ENCODE measurements at regions of chr2 and their contacts with region 1.

Region 1: DNA sequence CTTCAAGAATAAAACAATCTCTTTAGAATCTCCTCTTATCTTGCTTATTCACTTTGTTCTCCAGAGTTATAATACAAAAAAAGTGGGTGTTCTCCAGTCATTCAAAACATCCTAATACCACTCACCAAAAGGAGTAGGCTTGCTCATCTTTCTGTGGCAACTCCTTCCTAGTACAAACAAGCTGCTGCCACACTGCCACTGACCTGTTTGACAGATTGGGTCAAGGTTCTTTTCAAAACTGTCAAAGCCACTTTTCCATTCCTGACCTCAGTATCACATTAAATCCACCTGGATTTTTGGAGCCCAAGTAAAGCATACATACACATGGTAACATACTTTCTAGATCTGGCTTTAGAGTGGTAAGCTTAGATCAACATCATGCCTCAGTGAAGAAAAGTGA is 59.8 kb downstream of the SLC25A12 start:
- DNase-seq: no peak
- H3K4me3 ChIP-seq: no peak overlapping the region
- H3K27ac ChIP-seq: no peak overlapping the region
- H3K4me1 ChIP-seq: peaks cover 2% of the 10 kb centered on the region
- H3K27me3 ChIP-seq: no peaks in the 10 kb centered on the region
- CTCF ChIP-seq: no peak
- EP300 ChIP-seq: no peak
- POLR2A ChIP-seq: no peak

Region 2: DNA sequence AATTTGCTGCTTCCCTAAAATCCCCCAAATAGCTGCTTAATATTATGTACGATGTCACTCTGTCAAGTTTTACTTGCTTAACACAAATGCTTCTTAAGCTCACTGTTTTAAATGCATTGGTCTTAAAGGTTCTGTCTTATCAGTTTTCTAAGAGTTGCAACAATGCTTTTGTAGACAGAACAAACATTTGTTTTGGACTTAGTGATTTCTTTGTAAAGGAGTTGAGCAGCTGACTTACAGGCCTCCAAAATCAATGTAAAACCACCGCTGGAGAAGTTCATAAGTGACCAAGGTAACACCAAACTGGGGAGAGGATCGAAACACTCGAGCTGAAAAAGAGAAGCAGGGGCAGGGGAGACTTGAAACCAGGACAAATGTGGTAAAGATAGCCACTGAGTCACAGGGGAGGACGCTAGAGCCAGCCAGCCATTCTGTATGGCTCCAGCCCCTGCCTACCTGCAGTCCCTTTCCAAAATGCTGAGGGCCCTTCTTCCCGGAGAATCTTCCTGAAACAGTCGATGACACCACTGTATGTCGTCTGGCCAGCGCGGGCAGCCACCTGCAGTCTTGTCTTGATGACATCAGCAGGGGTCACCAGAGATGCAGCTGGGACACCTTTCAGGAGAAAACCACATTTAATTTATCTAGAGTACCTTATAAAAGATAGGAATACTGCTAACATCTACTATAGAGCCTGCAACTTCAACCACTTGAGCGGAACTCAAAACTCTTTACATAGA is 46.8 kb before region 1 on chr2:
- intact Hi-C with region 1: no loop called
- DNase-seq: no peak
- H3K4me3 ChIP-seq: no peak overlapping the region
- H3K27ac ChIP-seq: no peak overlapping the region
- H3K4me1 ChIP-seq: no peaks in the 10 kb centered on the region
- H3K27me3 ChIP-seq: no peaks in the 10 kb centered on the region
- CTCF ChIP-seq: no peak
- EP300 ChIP-seq: no peak
- POLR2A ChIP-seq: no peak

Region 3: GRCh38 chr2:171930385-171930784 is 96.1 kb after region 1 on chr2:
- intact Hi-C with region 1: loop called in 1 of 4 experiments (anchors 5 kb)
- DNase-seq: no peak
- H3K4me3 ChIP-seq: no peak overlapping the region
- H3K27ac ChIP-seq: no peak overlapping the region
- H3K4me1 ChIP-seq: no peaks in the 10 kb centered on the region
- H3K27me3 ChIP-seq: no peaks in the 10 kb centered on the region
- CTCF ChIP-seq: no peak
- EP300 ChIP-seq: no peak
- POLR2A ChIP-seq: no peak

Region 4: GRCh38 chr2:171985076-171985475 is 150.8 kb after region 1 on chr2:
- intact Hi-C with region 1: no loop called
- DNase-seq: no peak
- H3K4me3 ChIP-seq: no peak overlapping the region
- H3K27ac ChIP-seq: no peak overlapping the region
- H3K4me1 ChIP-seq: no peaks in the 10 kb centered on the region
- H3K27me3 ChIP-seq: no peaks in the 10 kb centered on the region
- CTCF ChIP-seq: no peak
- EP300 ChIP-seq: no peak
- POLR2A ChIP-seq: no peak

Measured in ovary (tissue), 10 donors.